ENCODE measurements at regions of chr15 and their contacts with region 1.

Region 1: GRCh38 chr15:78968539-78969271 is 23.9 kb upstream of the CTSH start:
- DNase-seq: no peak
- H3K4me3 ChIP-seq: no peak overlapping the region
- H3K27ac ChIP-seq: no peak overlapping the region
- H3K27me3 ChIP-seq: peaks cover 5% of the 10 kb centered on the region
- CTCF ChIP-seq: no peak

Region 2: DNA sequence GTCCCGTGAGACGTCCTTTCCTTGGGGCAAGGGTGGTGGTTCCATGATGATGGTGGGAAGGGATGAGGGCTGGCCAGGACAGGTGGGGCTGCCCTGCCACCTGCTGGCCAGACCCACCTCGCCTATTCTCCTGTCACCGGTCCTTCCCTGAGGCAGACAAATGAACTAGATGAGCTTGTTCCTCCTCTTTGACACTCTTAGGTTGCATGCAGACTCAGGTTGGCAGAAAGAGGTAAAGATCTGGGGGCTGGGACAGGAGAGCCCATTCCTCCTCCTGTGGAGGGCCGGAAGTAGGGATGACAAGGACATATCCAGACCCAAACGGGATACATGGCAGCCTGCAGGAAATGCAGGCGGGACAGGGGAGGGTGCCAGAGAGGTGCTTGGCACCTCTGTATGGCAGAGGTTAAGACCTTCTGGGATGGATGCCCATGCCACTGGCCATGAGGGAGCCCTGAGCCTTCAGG is 772.9 kb before region 1 on chr15:
- CTCF ChIA-PET with region 1: no interaction called
- POLR2A ChIA-PET with region 1: no interaction called
- DNase-seq: no peak
- H3K4me3 ChIP-seq: no peak overlapping the region
- H3K27ac ChIP-seq: no peak overlapping the region
- H3K27me3 ChIP-seq: peaks cover 9% of the 10 kb centered on the region
- CTCF ChIP-seq: peak; percentile 60

Region 3: GRCh38 chr15:78979456-78980320 is 11.0 kb after region 1 on chr15:
- CTCF ChIA-PET with region 1: interaction called, 14 read pairs
- POLR2A ChIA-PET with region 1: no interaction called
- DNase-seq: peak; percentile 37
- H3K4me3 ChIP-seq: no peak overlapping the region
- H3K27ac ChIP-seq: no peak overlapping the region
- H3K27me3 ChIP-seq: no peaks in the 10 kb centered on the region
- CTCF ChIP-seq: peak; percentile 72